ENCODE measurements at regions of chr14 and their contacts with region 1.

Region 1: DNA sequence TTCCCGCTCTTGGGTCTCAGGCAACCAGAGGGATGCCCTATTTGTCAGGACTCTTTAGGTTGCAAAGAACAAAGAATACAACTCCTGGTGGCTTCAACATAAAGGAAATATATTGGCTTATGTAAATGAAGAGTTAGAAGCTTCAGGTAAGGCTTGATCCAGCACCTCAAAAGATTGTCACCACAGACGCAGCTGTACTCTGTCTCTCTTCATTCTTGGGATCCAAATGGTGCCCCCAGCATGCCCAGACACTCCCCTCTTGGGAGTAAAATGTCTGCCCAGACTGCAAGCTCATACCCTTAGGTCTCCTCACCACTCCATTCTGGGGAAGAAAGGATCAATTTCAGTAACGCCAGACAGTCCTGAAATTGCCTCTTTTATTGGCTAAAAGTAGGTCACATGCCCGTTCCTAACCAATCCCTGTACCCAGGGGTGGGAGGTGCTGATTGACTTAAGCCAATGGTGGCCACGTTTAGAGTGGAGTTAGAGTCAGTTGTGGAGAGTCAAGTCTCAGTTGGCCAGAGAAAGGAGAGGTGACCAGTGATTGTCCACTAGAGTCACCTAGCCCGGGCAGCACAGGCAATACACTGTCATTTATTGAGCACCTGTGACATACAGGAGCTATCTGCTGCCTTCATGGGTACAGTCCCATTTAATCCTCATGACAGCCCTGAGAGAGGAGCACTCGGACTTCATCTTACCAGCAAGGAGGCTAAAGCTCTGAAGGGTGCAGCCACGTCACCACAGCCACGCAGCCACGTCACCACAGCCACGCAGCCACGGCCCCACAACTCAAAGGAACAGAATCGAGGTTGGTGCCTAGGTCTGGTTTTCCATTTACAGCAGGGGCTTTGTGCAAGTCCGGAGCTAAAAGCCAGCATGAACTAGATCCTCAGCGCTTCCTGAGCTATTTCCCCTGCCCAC is 19.7 kb upstream of the BEGAIN start:
- DNase-seq: peak; percentile 10

Region 2: DNA sequence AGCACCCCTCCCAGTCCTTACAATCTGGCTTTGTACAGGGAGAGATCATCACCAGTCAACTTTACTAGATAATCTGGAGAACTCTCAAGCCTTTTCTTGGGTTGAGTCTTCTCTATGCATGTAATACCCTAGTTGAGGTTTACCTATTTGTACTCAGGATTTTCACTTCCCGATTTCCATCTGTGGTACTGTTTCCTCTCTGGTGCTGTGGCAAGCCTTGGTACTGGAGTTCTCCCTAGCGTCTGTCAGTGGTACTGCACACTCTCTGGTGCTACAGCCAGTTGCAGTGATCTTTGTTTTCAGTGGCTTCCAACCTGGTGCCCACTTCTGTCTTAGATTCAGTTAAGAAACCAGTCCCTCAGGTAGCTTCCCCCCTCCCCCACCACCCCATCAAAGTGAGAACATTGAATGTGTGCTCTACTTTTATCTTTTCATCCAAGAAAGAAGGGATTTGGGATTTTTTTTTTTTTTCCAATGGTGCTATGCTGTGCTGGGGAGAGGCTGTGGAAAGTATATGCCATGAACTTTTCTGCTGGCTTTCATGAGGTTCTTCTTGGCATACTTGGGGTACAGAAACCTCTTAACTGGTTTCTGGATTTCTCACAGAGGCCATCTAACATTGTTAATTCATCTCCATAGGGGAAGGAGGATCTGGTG is 611.1 kb before region 1 on chr14:
- intact Hi-C with region 1: no loop called
- DNase-seq: no peak

Region 3: GRCh38 chr14:100297302-100298300 is 309.3 kb before region 1 on chr14:
- intact Hi-C with region 1: no loop called
- DNase-seq: peak; percentile 93

Region 4: GRCh38 chr14:100629696-100630095 is 22.7 kb after region 1 on chr14:
- intact Hi-C with region 1: loop called in 1 of 2 experiments (anchors 1 kb)
- DNase-seq: no peak

Measured in posterior vena cava (tissue), 2 donors.